ENCODE measurements at regions of chr20 and their contacts with region 1.

Region 1: GRCh38 chr20:17995967-17996819 is 27.4 kb downstream of the MGME1 start:
- DNase-seq: peak; percentile 39
- H3K4me3 Mint-ChIP-seq: no peak overlapping the region
- H3K27ac Mint-ChIP-seq: peak overlapping the region; percentile 44
- H3K4me1 Mint-ChIP-seq: peaks cover 39% of the 10 kb centered on the region
- H3K27me3 Mint-ChIP-seq: no peaks in the 10 kb centered on the region

Region 2: DNA sequence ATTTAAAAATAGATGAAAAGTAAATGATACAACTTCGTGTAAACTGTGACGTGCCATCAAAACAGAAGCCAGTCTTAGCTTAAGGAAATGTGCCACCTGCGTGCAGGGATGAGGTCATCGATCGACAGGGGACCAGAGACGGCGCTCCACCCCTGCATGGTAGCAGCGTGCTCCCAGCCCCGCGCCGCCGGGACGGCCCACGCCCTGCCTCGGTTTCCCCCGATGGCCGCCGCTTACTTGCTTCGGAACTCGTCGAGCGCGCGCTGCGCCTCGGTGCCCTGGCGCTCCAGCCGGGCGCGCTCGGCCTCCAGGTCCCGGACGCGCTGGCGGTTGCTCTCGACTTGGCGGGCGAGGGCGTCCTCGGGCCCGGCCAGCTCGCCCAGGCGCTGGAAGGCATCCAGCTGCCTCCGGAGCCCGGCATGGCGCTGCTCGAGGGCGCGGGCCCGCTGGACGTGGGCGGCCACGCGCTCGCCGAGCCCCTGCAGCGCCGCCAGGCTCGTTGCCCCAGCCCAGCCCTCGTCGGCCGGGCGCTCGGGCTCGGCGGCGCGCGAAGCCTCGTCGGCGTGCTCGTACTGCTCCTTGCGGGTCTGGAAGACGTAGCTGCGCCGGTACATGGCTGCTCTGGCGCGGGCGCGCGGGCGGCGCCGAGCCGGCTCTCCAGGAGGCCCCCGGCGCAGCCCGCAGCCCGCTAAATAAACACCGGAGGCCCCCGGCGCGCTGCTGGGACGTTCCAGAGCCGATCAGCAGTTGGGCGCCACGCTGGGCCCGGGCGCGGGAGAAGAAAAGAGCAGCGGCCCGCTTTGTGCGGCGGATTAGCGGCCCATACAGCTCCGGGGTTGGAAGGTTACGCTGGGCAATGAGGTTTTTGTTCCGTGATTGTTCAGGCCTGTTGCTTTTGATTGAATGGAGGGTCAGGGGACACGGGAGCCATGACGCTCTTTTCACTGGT is 465.2 kb before region 1 on chr20 and contains the start of gene BFSP1:
- intact Hi-C with region 1: loop called (anchors 2 kb)
- DNase-seq: peak; percentile 55
- H3K4me3 Mint-ChIP-seq: peak within 1 kb of the TSS; percentile 82
- H3K27ac Mint-ChIP-seq: peak within 1 kb of the TSS; percentile 92
- H3K4me1 Mint-ChIP-seq: peaks cover 22% of the 10 kb centered on the region
- H3K27me3 Mint-ChIP-seq: peaks cover 15% of the 10 kb centered on the region
- total RNA-seq, gene BFSP1: 0.51 and 0.82 TPM in 2 replicates

Region 3: DNA sequence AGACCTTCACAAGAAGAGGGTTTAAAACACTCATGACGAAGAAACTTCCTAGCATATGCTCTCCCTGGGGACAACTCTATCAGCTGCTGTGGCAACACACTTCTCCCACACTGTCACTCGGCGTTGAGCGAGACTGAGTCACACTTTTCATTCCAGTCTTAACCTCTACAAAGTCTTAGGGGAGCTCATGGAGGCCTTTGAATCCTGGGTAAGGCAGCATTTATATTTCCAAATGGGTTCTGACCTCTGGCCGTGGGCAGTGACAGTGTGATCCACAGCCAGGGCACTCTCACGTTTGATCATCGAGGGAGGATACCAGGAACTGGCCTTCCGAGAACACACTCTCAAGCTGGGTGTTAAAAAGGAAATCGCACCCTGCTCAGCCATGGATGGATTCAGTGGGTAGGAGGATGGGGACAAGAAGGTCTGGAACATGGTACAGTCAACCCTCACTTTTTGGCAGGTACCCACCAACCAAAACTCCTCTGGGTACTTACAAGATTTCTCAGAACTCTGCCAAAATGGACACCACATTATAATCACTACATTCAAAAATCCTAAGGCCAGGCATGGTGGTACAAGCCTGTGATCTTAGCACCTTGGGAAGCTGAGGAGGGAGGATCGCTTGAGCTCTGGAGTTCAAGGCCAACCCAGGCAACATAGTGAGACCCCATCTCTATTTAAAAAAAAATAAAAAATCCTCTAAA is 333.7 kb before region 1 on chr20:
- intact Hi-C with region 1: loop called (anchors 5 kb)
- DNase-seq: no peak
- H3K4me3 Mint-ChIP-seq: no peak overlapping the region
- H3K27ac Mint-ChIP-seq: peak overlapping the region; percentile 61
- H3K4me1 Mint-ChIP-seq: peaks cover 60% of the 10 kb centered on the region
- H3K27me3 Mint-ChIP-seq: no peaks in the 10 kb centered on the region

Region 4: DNA sequence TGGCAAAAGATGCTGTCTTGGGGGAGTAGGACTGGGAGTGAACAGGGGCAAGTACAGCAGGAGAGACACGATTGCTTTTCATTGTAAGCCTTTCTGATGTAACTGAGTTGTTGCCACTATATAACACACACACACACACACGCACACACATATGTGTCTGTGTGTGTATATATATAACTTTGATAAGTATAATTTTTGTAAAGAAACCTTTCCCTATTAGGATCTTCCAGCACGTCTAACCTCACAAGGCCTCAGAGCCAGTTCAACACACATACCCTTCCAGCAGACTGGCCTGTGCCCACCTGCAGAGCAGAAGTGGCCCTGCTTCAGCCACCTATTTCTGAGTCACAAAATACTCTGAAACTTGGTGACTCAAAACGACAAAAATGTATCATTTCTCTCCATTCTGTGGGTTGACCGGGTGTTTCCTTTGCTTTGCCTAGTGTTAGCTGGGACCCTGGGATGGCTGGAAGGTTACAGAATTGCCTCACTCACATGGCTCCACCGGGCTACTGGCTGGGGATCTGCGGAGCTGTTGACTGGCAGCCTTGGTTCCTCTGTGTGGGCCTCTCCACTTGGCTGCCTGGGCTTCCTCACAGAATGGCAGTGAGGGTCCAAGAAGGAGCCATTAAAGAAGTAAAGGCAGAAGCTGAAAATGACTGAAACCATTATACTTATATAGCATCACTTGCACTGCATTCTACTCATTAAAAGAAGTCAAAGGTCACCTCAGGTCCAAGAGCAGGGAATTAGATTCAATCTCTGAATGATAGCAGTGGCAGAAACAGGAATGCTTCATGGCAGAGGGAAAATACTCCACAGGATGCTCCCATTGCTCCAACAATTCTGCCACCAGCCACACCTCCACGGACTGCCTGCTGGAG is 170.0 kb before region 1 on chr20:
- intact Hi-C with region 1: loop called (anchors 10 kb)
- DNase-seq: no peak
- H3K4me3 Mint-ChIP-seq: no peak overlapping the region
- H3K27ac Mint-ChIP-seq: no peak overlapping the region
- H3K4me1 Mint-ChIP-seq: peaks cover 17% of the 10 kb centered on the region
- H3K27me3 Mint-ChIP-seq: no peaks in the 10 kb centered on the region

Region 5: DNA sequence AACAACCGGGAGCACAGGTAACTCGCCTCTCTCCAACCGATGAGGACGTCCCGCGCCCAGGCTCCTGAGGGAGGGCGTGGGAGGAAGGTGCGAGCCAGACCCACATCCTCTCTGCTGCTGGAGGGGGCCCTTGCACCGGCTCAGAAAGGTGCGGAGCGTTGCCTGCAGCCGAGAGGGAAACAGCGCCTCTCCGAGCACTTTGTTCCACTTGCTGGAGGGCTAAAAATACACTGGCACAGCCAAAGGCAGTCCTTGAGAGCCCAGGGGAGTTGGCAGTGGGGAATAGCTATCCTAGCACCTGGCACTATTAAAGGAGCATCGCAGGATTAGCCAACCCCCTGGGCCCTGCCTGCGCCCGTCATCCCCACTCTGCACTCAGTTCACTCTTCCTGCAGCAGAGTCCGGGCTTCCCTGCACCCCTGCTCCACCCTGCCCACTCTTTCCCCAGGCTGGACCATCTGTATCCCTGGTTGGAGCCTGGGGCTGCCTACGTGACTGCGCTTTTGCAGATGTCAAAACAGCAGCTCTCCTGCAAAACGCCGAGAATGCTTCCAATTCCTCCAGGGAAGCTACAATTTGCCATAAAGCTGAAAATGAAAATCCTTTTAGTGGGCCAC is 136.5 kb before region 1 on chr20:
- intact Hi-C with region 1: no loop called
- DNase-seq: no peak
- H3K4me3 Mint-ChIP-seq: no peak overlapping the region
- H3K27ac Mint-ChIP-seq: no peak overlapping the region
- H3K4me1 Mint-ChIP-seq: peaks cover 34% of the 10 kb centered on the region
- H3K27me3 Mint-ChIP-seq: peaks cover 20% of the 10 kb centered on the region

Region 6: DNA sequence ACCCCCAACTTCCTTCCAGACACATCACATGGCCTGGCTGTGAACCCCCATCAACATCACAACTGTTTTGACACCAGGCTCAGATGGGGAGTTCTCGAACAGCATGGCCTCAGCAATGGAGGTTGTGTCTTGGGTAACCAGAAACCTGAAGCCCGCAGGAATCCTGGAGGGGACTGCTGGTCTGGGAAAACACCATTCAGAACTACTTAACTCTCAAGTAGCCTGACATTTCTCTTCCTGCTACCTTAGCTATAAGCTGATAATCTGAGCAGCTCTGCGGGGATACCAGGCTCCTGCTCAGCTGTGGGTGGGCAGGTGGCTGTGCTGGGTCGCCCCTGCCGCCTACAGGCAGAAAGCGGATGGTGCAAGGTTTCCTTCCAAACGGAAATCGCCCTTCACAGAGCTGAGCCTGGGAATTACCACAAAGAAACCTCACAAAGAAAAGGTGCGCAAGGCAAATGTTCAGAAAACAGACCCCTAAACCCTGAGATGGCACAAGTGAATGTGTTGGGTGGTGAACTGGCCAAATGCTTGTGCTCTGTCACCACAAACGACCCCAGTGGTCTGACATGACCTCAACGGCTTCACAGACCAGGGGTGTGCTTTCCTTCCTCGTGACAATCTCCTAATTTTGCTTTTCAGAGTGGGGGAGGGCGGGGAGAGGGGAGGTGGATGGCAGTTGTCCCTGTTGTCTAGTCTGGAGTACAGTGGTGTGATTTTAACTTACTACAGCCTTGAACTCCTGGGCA is 57.1 kb before region 1 on chr20:
- intact Hi-C with region 1: loop called (anchors 10 kb)
- DNase-seq: peak; percentile 41
- H3K4me3 Mint-ChIP-seq: no peak overlapping the region
- H3K27ac Mint-ChIP-seq: peak overlapping the region; percentile 52
- H3K4me1 Mint-ChIP-seq: peaks cover 22% of the 10 kb centered on the region
- H3K27me3 Mint-ChIP-seq: no peaks in the 10 kb centered on the region

Region 7: GRCh38 chr20:18032977-18033892 is 37.0 kb after region 1 on chr20:
- intact Hi-C with region 1: no loop called
- DNase-seq: no peak
- H3K4me3 Mint-ChIP-seq: no peak overlapping the region
- H3K27ac Mint-ChIP-seq: no peak overlapping the region
- H3K4me1 Mint-ChIP-seq: no peaks in the 10 kb centered on the region
- H3K27me3 Mint-ChIP-seq: no peaks in the 10 kb centered on the region

Region 8: DNA sequence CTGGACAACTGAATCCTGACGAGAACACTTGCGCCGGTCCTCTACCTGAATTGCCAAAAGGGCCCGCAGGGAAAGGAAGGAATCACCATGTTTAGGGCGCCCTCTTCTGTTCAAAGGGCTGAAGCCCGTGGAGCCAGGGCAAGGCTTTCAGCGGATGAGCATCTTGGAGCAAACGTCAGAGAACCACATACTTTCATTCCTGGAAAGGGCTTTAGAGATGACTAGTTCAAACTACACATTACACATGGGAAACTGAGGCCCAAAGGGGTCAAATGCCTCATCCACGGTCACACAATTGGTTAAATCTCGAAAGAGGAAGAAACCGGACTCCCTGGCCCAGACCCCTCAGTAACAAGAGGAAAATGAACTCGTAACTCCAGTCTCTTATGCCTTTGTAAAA is 280.6 kb after region 1 on chr20:
- intact Hi-C with region 1: loop called (anchors 2 kb)
- DNase-seq: peak; percentile 57
- H3K4me3 Mint-ChIP-seq: no peak overlapping the region
- H3K27ac Mint-ChIP-seq: no peak overlapping the region
- H3K4me1 Mint-ChIP-seq: peaks cover 7% of the 10 kb centered on the region
- H3K27me3 Mint-ChIP-seq: peaks cover 38% of the 10 kb centered on the region